ENCODE measurements at regions of chr3 and their contacts with region 1.

Region 1: GRCh38 chr3:142315083-142315482 is 89.7 kb upstream of the GK5 start:
- DNase-seq: no peak
- H3K4me3 Mint-ChIP-seq: no peak overlapping the region
- H3K27ac Mint-ChIP-seq: no peak overlapping the region
- H3K4me1 Mint-ChIP-seq: peaks cover under 1% of the 10 kb centered on the region
- H3K27me3 Mint-ChIP-seq: no peaks in the 10 kb centered on the region

Region 2: DNA sequence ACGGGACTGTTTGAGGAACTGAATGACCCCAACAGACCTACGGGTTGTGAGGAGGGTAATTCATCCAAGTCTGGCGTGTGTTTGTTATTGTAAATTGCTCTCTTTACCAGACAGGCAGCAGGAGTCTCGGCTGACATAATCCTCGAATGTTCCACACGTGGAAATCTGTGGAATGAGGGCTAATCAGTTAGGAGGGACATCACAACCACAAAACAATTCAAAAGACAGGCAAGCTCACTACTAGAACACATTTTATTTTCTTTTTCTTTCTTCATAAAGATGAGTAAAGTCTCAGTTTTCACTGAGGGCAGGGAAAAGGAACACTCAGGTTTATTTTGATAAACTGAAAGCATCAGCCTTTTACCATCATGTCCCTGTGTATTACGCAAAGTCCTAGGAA is 498.1 kb before region 1 on chr3:
- intact Hi-C with region 1: loop called (anchors 5 kb)
- DNase-seq: no peak
- H3K4me3 Mint-ChIP-seq: no peak overlapping the region
- H3K27ac Mint-ChIP-seq: no peak overlapping the region
- H3K4me1 Mint-ChIP-seq: no peaks in the 10 kb centered on the region
- H3K27me3 Mint-ChIP-seq: peaks cover 33% of the 10 kb centered on the region

Measured in activated T-helper 2 cell treated with anti-CD3 and anti-CD28 coated beads, Interferon-gamma antibody, Interleukin-2, Interleukin-4, amounts not matched to agents 10 μg/mL and 5 μg/mL and 100 μg/mL, durations not matched to agents 14 hours and 24 hours and 36 hours (primary cell).